Sigmoid colon (tissue), 7 donors: ENCODE measurements at regions of chr19 and their contacts with region 1.

Region 1: DNA sequence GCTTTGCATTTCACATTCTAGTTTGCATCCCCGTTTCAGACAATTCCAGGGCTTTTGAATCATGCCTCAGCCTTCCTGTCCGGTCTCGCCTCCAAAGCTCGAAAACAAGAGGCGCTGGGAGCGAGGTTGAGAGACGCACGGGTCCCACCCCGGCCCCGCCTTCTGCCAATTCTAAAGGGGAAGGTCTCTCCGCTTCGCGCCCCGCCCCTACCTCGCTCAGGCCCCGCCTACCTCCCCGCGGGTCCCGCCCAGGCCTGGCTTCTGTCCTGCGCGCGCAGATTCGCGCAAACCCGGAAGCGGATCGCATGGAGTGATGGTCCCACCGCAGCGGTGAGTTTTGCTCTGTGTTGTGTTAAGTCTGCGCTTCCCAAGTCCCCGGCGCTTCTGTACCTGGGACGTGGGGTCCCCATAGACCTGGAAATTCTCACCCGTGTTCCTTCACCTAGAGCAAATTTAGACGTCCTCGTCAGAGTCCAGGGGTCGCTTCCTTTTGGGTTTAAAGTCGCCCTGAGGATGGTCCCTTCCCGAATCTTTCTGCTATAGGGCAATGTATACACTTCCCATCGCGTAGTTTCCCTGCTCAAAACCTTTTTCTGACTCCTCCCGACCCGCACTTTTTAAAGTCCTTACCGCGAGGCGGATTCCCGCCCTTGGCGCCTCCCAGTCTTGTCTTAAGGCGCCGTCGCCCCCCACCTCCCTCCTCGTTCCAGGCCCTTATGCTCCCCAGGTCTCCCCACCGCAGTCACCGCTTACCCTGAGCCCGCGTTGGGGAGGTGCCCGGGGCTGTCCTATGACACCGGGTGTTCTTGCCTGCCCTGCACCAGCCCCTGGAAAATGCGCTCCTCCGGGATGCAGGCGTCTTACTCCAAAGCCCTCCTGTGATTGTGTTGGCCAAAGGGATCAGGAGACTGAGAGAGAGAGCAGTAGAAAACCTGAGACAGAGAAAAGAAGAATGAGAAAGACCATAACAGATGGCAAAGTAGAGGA is at the start of gene ZNF845:
- DNase-seq: peak; percentile 98
- H3K4me3 ChIP-seq: peak within 1 kb of the TSS; percentile 41 to 75 (median 66)
- H3K27ac ChIP-seq: peak within 1 kb of the TSS; percentile 80 to 88 (median 82)
- H3K4me1 ChIP-seq: peaks cover 0 to 15% (median 12%) of the 10 kb centered on the region in 4 donors
- H3K27me3 ChIP-seq: peaks cover 0 to 5% (median 0%) of the 10 kb centered on the region in 3 donors
- CTCF ChIP-seq: no peak
- EP300 ChIP-seq: no peak
- POLR2A ChIP-seq: peak; percentile 44 to 50
- total RNA-seq, gene ZNF845: 4.6 to 8.9 (median 7.2) TPM

Region 2: DNA sequence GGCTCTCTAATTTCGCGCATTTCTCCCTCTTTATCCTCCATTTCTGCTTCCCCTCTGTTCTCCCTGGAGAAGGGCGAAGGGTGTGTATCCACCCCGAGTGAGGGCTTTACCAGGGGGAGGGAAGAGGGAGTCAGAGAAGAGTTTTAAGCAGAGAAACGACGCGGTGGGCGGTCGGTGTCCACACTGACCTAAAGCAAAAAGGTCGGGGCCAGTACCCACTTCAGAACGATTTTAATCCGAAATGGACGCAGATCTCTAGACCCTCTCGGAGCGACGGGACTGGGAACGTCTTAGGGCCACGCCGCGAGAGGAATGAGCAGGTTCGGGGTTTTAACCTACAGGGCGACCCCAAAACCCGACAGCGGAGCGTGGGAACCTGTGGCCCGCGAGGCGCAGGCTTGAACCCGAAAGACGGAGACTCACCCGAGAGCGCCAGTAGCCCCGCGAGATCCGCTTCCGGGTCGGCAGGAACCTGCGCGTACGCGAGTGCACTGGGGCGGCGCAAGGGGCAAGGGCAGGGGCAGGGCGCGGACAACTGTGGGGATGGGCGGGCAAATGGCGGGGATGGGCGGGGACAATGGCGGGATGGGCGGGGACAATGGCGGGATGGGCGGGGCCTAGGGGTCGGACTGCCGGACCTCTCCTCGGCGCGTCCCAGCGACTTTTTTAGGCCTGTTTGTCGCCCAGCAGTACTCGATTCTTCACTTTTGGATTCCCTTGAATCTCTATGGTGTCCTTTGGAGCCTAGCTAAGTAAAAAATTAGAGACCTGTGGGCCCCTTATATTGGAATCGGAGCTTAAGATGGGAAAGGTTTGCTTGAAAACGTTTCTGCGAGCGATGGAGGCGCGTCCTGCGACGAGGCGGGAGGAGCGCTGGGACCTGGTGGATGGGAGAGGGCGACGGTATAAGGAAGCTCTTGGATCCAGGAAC is 79.1 kb before region 1 on chr19 and contains the start of gene ZNF677:
- intact Hi-C with region 1: loop called (anchors 5 kb)
- DNase-seq: peak; percentile 96
- H3K4me3 ChIP-seq: peak within 1 kb of the TSS; percentile 74 to 84 (median 75)
- H3K27ac ChIP-seq: peak within 1 kb of the TSS; percentile 78 to 86 (median 82)
- H3K4me1 ChIP-seq: peaks cover 0 to 15% (median 10%) of the 10 kb centered on the region in 4 donors
- H3K27me3 ChIP-seq: no peaks in the 10 kb centered on the region
- CTCF ChIP-seq: no peak
- EP300 ChIP-seq: no peak
- POLR2A ChIP-seq: peak in 1 of 2 donors; percentile 58
- total RNA-seq, gene ZNF677: 15.8 to 28.5 (median 20.5) TPM

Region 3: DNA sequence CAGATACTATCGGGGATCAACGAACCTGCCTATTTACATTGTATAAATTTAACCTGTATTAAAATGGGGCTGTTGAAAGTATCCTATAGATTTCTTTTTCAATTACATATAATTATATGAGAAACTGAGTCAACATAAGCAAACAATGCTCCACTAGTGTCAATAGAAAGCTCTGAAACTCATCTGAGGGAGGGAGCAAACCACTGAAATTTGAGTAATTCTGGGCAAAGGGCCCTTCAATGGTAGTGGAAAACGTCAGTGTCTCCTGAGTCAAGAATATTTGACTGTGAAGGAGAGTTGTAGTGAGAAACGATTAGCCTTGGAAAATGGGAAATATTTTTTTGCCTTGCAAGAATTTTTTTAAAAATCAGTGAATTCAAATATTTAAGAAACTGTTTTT is 48.7 kb before region 1 on chr19:
- intact Hi-C with region 1: no loop called
- DNase-seq: no peak
- H3K4me3 ChIP-seq: no peak overlapping the region
- H3K27ac ChIP-seq: no peak overlapping the region
- H3K4me1 ChIP-seq: no peaks in the 10 kb centered on the region
- H3K27me3 ChIP-seq: no peaks in the 10 kb centered on the region
- CTCF ChIP-seq: no peak
- EP300 ChIP-seq: no peak
- POLR2A ChIP-seq: no peak

Region 4: GRCh38 chr19:53365134-53365898 is 31.6 kb after region 1 on chr19 and contains the start of gene ZNF525:
- intact Hi-C with region 1: loop called (anchors 2 kb)
- DNase-seq: peak; percentile 94
- H3K4me3 ChIP-seq: peak within 1 kb of the TSS; percentile 59 to 74 (median 67)
- H3K27ac ChIP-seq: peak within 1 kb of the TSS; percentile 71 to 84 (median 76)
- H3K4me1 ChIP-seq: peaks cover 0 to 13% (median 3%) of the 10 kb centered on the region in 4 donors
- H3K27me3 ChIP-seq: no peaks in the 10 kb centered on the region
- CTCF ChIP-seq: peak in 1 of 4 experiments; percentile 16
- EP300 ChIP-seq: no peak
- POLR2A ChIP-seq: peak; percentile 16 to 53
- total RNA-seq, gene ZNF525: 6.3 to 8.3 (median 7.0) TPM

Region 5: DNA sequence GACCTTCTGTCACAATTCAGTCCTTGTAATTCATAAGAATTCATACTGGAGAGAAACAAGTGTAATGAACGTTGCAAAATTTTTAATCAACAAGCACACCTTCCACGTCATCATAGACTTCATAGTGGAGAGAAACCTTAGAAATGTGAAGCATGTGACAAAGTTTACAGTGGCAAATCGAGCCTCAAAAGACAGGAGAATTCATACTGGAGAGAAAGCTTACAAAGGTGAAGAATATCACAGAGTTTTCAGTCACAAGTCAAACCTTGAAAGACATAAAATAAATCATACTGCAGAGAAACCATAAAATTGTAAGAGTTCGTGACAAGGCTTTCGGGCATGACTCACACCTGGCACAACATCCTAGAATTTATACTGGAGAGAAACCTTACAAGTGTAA is 158.4 kb after region 1 on chr19:
- intact Hi-C with region 1: no loop called
- DNase-seq: no peak
- H3K4me3 ChIP-seq: no peak overlapping the region
- H3K27ac ChIP-seq: no peak overlapping the region
- H3K4me1 ChIP-seq: no peaks in the 10 kb centered on the region
- H3K27me3 ChIP-seq: no peaks in the 10 kb centered on the region
- CTCF ChIP-seq: no peak
- EP300 ChIP-seq: no peak
- POLR2A ChIP-seq: no peak